Activated B cell treated with CpG ODN at 0.5 μM for 24 hours (primary cell): ENCODE measurements at regions of chr2 and their contacts with region 1.

Region 1: DNA sequence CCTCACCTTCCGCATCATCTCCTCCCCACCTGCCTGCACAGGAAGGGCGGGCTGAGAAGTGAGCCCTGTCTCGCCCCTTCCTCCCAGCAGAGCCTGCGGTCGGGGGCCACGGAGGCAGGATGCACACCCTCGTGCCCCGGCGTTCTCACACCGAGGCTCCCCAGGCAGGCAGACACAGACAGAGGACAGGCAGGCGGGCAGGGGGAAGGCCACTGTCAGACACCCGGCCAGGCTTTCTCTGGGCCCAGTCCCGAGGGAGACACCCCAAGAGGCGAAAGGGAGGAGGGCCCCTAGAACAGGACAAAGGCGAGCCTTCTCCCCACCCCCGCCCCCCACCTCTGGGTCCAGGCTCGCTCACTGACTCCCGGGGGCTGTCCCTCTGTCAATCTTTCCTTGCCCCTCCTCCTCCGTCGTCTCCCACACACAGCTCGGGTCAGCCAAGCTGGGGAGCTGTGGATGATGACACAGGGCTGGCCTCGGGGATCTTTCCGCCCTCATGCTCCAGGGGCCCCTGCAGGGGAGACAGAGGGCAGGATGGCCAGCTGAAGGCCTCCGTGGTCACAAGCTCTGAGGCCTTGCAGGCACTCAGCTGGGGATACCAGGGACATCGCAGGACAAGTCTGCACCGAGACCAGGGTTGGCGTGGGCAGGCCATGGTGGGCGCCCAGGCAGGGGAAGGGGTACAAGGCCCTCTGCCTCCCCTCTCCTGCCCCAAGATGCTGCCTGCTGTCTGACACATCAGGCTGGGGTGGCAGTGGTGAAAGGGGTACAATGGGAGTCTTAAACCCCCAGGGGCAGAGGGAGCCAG is 24.9 kb downstream of the BIN1 start:
- DNase-seq: peak; percentile 59
- ATAC-seq: peak; percentile 66
- H3K4me3 Mint-ChIP-seq: peak overlapping the region; percentile 84
- H3K27ac Mint-ChIP-seq: peak overlapping the region; percentile 95
- H3K4me1 Mint-ChIP-seq: peaks cover 92% of the 10 kb centered on the region
- H3K27me3 Mint-ChIP-seq: no peaks in the 10 kb centered on the region
- CTCF ChIP-seq: no peak

Region 2: DNA sequence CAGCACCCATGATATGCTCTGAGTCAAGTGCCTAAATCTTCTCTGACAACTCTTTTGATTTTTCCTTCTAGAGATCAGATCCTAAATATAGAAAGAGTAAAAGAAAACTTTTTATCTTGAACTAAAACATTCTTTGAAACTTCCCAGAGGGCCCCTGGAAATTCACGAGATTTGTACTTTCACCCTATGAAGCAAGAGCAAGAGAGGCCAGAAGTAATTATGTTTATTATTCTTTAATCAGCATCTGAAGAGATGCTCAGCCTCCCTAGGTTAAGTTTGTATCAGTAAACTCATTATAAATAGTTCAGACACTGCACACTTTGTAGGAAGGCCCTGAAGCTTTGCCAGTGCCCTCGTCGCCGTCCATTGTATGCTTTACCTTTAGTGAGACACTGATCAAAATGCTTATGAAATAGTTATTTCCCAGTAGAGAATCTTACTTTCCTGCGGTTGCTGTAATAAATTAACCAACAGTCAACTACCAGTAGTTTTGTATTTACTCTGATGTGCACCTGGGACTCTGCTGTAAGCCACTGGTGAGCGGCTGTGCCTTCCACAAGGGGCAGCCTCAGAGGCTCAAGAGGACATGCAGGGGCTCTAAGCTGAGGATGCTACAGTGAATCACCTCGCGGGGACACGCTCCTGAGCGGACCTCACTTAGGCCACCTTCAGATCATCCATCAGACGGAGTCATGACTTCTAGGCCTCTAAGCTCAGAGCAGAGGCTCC is 47.0 kb before region 1 on chr2:
- CTCF ChIA-PET with region 1: no interaction called
- POLR2A ChIA-PET with region 1: no interaction called
- intact Hi-C with region 1: no loop called
- DNase-seq: no peak
- ATAC-seq: no peak
- H3K4me3 Mint-ChIP-seq: no peak overlapping the region
- H3K27ac Mint-ChIP-seq: no peak overlapping the region
- H3K4me1 Mint-ChIP-seq: peaks cover 8% of the 10 kb centered on the region
- H3K27me3 Mint-ChIP-seq: no peaks in the 10 kb centered on the region
- CTCF ChIP-seq: no peak

Region 3: GRCh38 chr2:127064642-127065250 is 17.3 kb before region 1 on chr2:
- CTCF ChIA-PET with region 1: interaction called, 10 read pairs
- POLR2A ChIA-PET with region 1: interaction called, 15 read pairs
- intact Hi-C with region 1: loop called (anchors 1 kb)
- DNase-seq: no peak
- ATAC-seq: peak; percentile 78
- H3K4me3 Mint-ChIP-seq: no peak overlapping the region
- H3K27ac Mint-ChIP-seq: no peak overlapping the region
- H3K4me1 Mint-ChIP-seq: peaks cover 13% of the 10 kb centered on the region
- H3K27me3 Mint-ChIP-seq: no peaks in the 10 kb centered on the region
- CTCF ChIP-seq: no peak

Region 4: DNA sequence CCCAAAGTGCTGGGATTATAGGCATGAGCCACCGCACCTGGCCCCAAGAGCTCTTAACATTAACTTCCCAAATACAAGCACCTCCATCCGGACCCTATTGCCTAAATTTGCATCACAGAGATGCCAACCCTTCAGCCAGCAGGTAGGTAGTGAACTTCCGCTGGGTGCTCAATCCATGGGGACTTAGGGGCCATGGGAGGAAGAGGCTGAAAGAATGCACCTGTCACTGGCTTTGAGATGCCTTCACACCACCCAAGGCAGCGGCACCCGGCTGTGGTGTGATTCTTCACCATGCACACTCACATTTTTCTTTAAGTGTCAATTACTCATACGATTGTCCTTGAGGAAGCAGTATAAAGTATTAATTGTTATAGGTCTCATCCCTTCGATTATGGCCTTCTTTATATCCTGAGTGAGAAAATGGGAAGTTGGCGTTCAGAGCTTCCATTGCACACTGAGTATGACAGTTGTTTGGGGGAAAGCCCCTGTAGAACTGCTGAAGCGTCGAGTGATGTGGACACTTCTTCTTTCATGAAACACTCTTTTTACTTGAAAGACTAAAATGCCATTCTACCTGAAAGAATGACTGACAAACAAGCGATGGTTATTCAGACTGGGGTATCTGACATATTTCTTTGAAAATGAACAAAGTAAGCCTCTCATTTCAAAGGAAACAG is 76.7 kb after region 1 on chr2:
- CTCF ChIA-PET with region 1: no interaction called
- POLR2A ChIA-PET with region 1: interaction called, 3 read pairs
- intact Hi-C with region 1: loop called (anchors 1 kb)
- DNase-seq: no peak
- ATAC-seq: peak; percentile 98
- H3K4me3 Mint-ChIP-seq: peak overlapping the region; percentile 56
- H3K27ac Mint-ChIP-seq: peak overlapping the region; percentile 7
- H3K4me1 Mint-ChIP-seq: peaks cover 37% of the 10 kb centered on the region
- H3K27me3 Mint-ChIP-seq: peaks cover 3% of the 10 kb centered on the region
- CTCF ChIP-seq: no peak

Region 5: DNA sequence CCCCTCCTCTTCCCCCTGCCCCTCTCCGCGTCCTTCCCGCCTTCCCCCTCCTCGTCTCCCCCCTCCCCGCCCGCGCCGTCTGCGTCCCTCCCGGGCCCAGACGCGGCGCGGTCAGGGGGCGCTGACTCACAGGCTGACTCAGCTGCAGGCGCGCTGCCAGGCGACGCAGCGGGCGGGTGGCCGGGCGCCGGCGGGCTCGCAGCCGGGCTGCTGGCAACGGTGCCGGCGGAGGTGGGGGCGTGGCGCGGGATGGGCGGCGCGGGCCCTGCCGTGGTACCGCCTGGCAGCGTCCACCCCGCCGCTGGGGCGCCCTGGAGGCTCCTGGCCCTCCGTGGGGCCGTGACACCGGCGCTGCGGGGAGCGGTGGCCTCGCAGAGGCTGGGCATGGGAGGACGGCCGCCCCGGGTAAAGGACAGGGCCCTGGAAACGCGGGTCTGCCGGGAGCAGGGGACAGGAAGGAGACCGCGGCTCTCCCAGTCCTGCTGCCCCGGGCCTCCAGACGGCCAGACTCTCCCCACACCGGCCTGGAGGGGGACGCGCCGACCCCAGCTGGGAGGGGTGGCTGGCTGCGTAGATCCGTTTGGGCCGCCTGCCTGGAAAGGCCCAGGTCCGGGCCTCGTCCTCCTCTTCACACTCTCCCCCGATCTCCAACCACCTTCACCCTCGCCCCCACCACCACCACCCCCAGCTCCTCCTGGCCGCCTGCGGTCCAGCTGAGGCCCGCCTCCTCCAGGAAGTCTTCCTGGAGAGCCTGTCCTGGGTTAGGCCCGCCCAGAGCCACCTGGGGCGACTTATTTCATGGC is 326.2 kb after region 1 on chr2:
- CTCF ChIA-PET with region 1: no interaction called
- POLR2A ChIA-PET with region 1: no interaction called
- intact Hi-C with region 1: loop called (anchors 5 kb)
- DNase-seq: peak; percentile 79
- ATAC-seq: peak; percentile 91
- H3K4me3 Mint-ChIP-seq: peak overlapping the region; percentile 65
- H3K27ac Mint-ChIP-seq: no peak overlapping the region
- H3K4me1 Mint-ChIP-seq: peaks cover 51% of the 10 kb centered on the region
- H3K27me3 Mint-ChIP-seq: no peaks in the 10 kb centered on the region
- CTCF ChIP-seq: no peak

Region 6: GRCh38 chr2:127664065-127664894 is 582.2 kb after region 1 on chr2:
- CTCF ChIA-PET with region 1: no interaction called
- POLR2A ChIA-PET with region 1: no interaction called
- intact Hi-C with region 1: no loop called
- DNase-seq: no peak
- ATAC-seq: peak; percentile 34
- H3K4me3 Mint-ChIP-seq: no peak overlapping the region
- H3K27ac Mint-ChIP-seq: no peak overlapping the region
- H3K4me1 Mint-ChIP-seq: peaks cover 9% of the 10 kb centered on the region
- H3K27me3 Mint-ChIP-seq: peaks cover 44% of the 10 kb centered on the region
- CTCF ChIP-seq: no peak